ENCODE measurements at regions of chr1 and their contacts with region 1.

Region 1: GRCh38 chr1:176066709-176067108 is 140.4 kb downstream of the COP1 start:
- DNase-seq: no peak
- H3K4me3 ChIP-seq: no peak overlapping the region
- H3K27ac ChIP-seq: no peak overlapping the region
- H3K4me1 ChIP-seq: no peaks in the 10 kb centered on the region
- H3K27me3 ChIP-seq: no peaks in the 10 kb centered on the region
- CTCF ChIP-seq: no peak

Region 2: GRCh38 chr1:175481126-175482066 is 585.3 kb before region 1 on chr1:
- intact Hi-C with region 1: loop called (anchors 10 kb)
- DNase-seq: no peak
- H3K4me3 ChIP-seq: no peak overlapping the region
- H3K27ac ChIP-seq: no peak overlapping the region
- H3K4me1 ChIP-seq: peaks cover 0 to 4% (median 0%) of the 10 kb centered on the region in 4 donors
- H3K27me3 ChIP-seq: no peaks in the 10 kb centered on the region
- CTCF ChIP-seq: peak; percentile 57 to 71